Ascending aorta (tissue), 2 donors: ENCODE measurements at regions of chr10 and their contacts with region 1.

Region 1: GRCh38 chr10:22714479-22715289 is at the start of gene PIP4K2A:
- DNase-seq: peak in 1 of 2 donors; percentile 86
- H3K4me3 ChIP-seq: peak within 1 kb of the TSS; percentile 89 to 96
- H3K27ac ChIP-seq: peak within 1 kb of the TSS; percentile 90 to 92
- H3K4me1 ChIP-seq: peaks cover 0 to 14% of the 10 kb centered on the region in 2 donors
- H3K27me3 ChIP-seq: no peaks in the 10 kb centered on the region
- CTCF ChIP-seq: no peak
- total RNA-seq, gene PIP4K2A: 34.9 TPM

Region 2: GRCh38 chr10:22228943-22229801 is 485.5 kb before region 1 on chr10:
- intact Hi-C with region 1: loop called (anchors 5 kb)
- DNase-seq: peak; percentile 41 to 92
- H3K4me3 ChIP-seq: peak overlapping the region; percentile 63 to 70
- H3K27ac ChIP-seq: peak overlapping the region; percentile 80 to 85
- H3K4me1 ChIP-seq: peaks cover 0 to 3% of the 10 kb centered on the region in 2 donors
- H3K27me3 ChIP-seq: no peaks in the 10 kb centered on the region
- CTCF ChIP-seq: no peak

Region 3: DNA sequence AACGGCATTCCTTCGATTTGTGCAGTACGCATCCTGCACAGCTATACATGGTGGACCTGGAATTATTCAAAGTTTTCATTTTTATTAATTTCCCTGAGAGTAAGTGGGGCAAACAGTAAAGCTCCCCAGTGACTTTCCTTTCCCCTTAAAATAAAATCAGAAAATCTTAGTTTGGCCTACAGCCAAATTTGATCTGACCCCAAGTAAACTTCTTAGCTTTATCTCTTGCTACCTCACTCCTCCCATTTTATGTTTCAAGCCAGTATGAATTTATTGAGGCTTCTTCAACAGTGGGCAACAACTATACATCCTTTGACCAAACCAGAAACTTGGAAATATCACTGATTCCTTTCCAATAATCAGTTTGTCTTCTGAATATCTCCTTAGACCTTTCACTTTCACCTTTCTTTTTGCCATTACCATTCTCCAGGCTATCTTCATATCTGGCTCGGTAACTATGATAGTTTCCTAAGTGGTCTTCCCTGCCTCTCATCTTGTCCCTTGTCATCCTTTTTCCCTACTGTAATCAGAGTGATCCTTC is 358.3 kb before region 1 on chr10:
- intact Hi-C with region 1: no loop called
- DNase-seq: no peak
- H3K4me3 ChIP-seq: no peak overlapping the region
- H3K27ac ChIP-seq: no peak overlapping the region
- H3K4me1 ChIP-seq: no peaks in the 10 kb centered on the region
- H3K27me3 ChIP-seq: no peaks in the 10 kb centered on the region
- CTCF ChIP-seq: no peak

Region 4: DNA sequence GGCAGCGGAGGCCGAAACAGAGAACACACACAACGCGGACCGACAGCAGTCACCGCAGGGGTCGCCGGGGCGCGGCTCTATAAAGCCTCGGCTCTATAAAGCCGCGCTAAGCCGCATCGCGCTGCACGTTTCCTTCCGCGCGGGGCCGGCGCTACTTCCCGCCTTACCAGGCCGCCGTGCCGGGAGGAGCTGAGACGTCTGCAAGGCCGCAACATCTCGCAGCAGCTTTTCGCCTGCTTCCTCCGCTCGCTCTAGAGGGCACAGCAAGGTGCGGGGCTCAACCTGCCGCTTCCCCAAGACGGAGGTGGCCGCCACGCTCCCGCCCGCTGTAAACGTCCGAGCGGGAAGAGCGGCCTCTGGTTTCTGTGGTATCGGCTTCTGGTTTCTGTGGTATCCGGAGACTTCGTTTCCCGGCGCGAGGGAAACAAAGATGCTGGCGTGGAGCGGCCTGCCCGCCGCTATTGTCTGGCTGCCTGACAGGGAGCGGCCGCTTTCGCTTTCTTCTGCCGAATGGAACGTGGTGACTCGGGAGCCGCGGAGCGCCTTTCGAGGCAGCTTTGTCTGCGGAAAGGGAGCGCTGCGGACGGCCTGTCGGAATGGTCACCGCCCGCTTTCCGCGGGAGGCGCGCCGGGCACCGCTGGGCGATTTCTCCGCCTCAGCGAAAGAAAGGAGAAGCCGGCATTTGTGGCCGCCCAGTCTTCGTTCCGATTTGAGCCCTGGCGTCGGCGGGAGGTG is 277.6 kb before region 1 on chr10:
- intact Hi-C with region 1: loop called (anchors 5 kb)
- DNase-seq: peak; percentile 43 to 94
- H3K4me3 ChIP-seq: peak overlapping the region; percentile 72 to 78
- H3K27ac ChIP-seq: peak overlapping the region; percentile 92 to 97
- H3K4me1 ChIP-seq: peaks cover 0 to 15% of the 10 kb centered on the region in 2 donors
- H3K27me3 ChIP-seq: no peaks in the 10 kb centered on the region
- CTCF ChIP-seq: peak in 1 of 3 experiments; percentile 19

Region 5: GRCh38 chr10:22655311-22655981 is 59.2 kb before region 1 on chr10:
- intact Hi-C with region 1: loop called (anchors 5 kb)
- DNase-seq: no peak
- H3K4me3 ChIP-seq: no peak overlapping the region
- H3K27ac ChIP-seq: peak overlapping the region in 1 of 2 donors; percentile 66
- H3K4me1 ChIP-seq: peaks cover 0 to 23% of the 10 kb centered on the region in 2 donors
- H3K27me3 ChIP-seq: no peaks in the 10 kb centered on the region
- CTCF ChIP-seq: no peak

Region 6: DNA sequence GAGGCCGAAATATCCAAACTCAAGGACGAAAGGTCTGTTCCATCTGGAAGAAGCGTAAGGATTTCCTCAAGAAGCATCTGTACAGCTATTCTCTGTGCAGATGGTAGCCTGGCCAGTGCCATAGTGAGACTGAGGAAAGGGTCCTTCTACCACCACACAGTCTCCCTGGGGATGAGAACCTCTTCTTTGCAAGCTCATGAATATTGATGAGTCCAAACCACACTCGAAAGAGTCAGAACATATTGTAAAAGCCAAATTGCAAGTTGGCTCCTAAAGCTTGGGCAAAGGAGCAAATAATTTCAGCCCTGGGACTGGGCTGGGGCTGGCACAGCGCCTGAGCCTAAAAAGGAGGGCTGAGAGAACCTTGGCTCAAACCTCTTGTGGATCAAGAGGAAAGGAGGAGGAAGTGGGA is 65.8 kb after region 1 on chr10:
- intact Hi-C with region 1: no loop called
- DNase-seq: no peak
- H3K4me3 ChIP-seq: no peak overlapping the region
- H3K27ac ChIP-seq: no peak overlapping the region
- H3K4me1 ChIP-seq: peaks cover 0 to 2% of the 10 kb centered on the region in 2 donors
- H3K27me3 ChIP-seq: no peaks in the 10 kb centered on the region
- CTCF ChIP-seq: no peak

Region 7: DNA sequence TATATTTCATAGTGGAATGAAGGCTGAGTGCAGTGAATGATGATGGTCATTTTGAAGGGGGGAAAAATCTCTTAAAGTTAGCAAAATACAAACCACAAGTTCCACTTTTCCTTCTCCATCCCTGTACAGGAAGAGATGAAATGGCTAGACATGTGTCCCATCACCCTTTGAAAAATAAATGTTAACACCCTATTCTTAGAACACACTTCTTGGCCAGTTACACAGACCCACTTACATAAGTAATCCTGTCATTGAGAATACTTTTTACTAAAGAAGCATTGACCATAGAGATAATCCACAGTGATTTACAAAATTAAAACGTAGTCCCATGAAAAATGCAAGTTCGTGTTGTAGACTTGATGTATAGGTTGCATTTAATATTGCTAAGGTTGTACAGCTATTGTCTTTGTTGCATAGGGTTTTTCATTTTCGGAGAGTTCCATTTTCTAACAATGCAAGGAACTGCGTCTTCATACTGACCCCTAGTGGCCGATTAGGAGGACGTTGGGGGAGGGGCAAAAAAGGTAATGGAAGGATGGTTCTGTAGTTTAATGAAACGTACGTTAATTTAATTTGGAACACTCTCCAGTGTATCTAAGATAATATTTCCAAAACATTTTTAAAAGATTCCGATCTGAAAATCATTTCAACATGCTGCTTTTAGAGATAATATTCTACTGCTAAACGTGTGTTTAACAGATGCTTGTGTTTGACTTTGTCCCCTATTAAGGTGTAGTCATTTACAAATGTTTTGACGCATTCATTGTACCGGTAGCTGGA is 274.1 kb after region 1 on chr10:
- intact Hi-C with region 1: loop called (anchors 5 kb)
- DNase-seq: peak in 1 of 2 donors; percentile 79
- H3K4me3 ChIP-seq: no peak overlapping the region
- H3K27ac ChIP-seq: no peak overlapping the region
- H3K4me1 ChIP-seq: peaks cover 0 to 3% of the 10 kb centered on the region in 2 donors
- H3K27me3 ChIP-seq: no peaks in the 10 kb centered on the region
- CTCF ChIP-seq: peak; percentile 86